Right ventricle myocardium inferior (tissue), 1 donor: ENCODE measurements at regions of chr19 and their contacts with region 1.

Region 1: DNA sequence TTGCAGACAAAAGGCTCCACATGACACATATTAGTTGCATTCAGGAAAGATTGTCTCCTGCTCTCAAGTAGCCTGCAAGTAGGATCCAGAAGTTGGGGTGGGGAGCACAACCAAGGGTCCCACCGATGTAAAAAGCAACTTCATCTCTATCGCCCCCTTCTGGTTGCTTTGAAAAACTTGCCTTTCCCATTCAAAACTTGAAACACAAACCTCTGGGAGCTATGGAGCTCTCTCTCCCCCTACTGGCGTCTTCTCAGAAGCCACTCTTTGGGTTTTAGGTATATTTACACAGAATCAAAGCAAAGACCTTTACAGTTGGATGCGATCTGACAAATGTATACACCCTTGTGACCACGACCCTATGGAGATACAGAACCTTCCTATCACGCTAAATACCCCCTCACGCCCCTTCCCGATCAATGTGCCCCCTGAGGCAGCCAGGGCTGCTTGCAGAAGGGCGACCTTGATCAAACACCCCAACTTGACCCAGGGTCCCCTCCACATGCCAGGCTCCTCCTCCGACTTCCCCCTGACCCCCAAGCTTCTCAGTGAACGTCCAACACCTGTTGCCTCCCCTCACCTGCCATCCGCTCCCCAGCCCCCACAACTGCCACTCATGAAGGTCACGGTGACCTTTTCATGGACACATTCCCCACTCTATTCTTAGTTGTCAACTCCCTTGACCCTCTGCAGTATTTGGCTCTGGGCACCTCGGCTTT is 10.1 kb downstream of the NOSIP start:
- DNase-seq: no peak
- ATAC-seq: peak; percentile 71

Region 2: GRCh38 chr19:49224856-49225255 is 345.4 kb before region 1 on chr19:
- intact Hi-C with region 1: loop called (anchors 10 kb)
- DNase-seq: peak; percentile 56
- ATAC-seq: peak; percentile 80

Region 3: DNA sequence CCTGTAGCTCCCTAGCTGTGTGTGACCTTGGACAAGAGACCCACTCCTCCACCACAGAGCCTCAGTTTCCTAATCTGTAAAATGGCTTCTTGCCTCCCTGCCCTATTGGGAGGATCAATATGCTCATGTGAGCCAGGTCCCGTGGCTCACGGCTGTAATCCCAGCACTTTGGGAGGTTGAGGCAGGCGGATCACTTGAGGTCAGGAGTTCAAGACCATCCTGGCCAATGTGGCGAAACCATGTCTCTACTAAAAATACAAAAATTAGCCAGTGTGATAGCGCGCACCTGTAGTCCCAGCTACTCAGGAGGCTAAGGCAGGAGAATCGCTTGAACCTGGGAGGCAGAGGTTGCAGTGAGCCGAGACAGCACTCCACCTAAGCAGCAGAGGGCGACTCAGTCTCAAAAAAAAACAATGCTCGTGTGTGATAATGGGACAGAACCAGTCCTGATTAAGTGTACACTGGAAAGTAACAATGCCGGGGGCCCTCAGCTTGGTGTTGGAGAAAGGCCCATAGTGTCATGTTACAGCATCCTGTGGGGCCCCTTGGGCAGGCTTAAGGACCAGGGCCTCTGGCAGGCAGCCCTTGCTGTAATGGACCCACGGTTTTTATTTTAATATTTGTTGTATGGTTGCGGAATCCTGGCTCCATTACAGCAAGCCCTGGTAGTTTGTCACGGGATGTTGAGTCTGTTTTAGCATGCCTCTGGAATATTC is 67.3 kb before region 1 on chr19:
- intact Hi-C with region 1: loop called (anchors 2 kb)
- DNase-seq: peak; percentile 56
- ATAC-seq: peak; percentile 59